AG04449 (cell line): ENCODE measurements at regions of chr1 and their contacts with region 1.

Region 1: DNA sequence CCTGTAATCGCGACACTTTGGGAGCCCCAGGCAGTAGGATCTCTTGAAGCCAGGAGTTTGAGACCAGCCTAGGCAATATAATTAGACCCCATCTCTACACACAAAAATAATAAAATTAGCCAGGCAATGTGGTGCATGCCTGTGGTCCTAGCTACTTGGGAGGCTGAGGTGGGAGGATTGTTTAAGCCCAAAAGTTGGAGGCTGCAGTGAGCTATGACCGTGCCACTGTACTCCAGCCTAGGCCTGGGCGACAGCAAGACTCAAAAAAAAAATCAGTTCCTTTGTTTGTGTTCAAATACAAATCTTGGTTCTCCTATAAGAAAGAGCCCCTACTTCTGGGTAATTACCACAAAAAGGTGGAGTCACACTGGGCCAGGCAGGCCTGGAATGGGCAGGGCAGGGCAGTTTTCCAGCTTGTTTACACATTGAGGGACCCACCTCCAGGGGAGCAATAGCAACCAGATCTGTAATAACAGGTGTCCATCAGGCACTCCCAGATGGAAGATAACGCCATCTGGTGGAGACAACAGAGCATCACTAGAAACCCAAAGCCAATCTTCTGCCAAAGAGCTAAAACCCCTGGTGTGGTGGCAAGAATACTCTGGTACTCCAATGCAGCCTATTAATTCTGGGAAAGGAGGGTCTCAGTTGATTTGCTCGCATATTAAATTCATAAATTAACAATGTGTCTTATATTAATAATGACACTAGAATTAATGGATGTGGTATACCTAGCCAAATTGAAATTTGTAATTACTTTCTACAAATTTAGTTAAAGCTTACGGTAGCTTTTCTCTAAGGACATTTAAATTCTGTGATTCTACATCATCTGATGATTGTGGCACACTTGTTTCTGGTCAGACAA is 13.2 kb downstream of the PPP1R15B start:
- DNase-seq: no peak
- H3K4me3 ChIP-seq: no peak overlapping the region
- CTCF ChIP-seq: peak; percentile 74

Region 2: DNA sequence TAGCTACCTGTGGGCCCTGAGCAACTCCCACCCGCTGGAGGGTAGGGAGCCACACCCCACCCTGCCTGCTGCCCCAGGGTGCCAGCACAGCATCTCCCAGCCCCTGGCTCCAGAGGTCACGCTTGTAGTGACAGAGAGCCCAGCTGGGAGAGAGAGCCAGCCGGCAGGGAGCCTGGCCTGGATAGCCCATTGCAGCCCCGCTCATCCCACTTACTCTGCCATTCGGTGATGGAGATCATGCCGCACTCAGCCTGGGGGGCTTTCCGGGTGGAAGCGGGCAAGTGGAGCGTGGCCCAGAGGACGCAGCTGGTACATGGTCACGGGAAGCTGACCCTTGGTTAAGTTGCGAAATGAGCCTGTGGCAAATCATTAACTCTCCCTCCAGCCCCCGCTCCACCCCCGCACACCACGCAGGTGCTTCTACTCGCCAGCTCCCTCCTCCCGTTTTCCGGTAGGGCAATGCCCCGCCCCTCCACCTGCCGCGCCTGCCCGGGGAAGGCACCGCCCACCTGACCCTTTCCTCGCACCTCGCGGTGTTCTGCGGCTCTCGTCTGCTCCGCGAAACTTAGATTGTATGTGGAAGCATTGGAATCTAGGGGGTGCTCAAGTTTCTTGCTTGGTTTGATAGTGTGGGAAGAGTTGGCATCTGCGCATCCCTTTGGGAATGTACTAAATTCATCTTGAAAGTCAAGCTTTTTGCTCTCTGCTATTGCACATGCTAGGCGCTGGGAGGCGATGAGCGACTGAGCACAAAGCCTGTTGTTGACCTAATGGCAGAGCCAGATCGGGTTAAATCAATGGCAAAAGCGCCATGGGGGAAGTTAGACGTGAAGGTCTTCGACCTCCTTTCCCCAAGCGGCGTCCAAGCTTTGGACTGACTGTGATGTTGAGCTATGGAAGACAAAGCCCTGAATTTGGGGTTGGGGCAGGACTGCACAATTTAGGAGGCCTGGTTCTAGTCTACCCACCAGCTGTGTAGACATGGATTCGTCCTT is 184.5 kb before region 1 on chr1 and contains the start of gene GOLT1A:
- CTCF ChIA-PET with region 1: interaction called, 53 read pairs
- POLR2A ChIA-PET with region 1: no interaction called
- DNase-seq: peak; percentile 59
- H3K4me3 ChIP-seq: peak within 1 kb of the TSS; percentile 8
- CTCF ChIP-seq: peak; percentile 75

Region 3: DNA sequence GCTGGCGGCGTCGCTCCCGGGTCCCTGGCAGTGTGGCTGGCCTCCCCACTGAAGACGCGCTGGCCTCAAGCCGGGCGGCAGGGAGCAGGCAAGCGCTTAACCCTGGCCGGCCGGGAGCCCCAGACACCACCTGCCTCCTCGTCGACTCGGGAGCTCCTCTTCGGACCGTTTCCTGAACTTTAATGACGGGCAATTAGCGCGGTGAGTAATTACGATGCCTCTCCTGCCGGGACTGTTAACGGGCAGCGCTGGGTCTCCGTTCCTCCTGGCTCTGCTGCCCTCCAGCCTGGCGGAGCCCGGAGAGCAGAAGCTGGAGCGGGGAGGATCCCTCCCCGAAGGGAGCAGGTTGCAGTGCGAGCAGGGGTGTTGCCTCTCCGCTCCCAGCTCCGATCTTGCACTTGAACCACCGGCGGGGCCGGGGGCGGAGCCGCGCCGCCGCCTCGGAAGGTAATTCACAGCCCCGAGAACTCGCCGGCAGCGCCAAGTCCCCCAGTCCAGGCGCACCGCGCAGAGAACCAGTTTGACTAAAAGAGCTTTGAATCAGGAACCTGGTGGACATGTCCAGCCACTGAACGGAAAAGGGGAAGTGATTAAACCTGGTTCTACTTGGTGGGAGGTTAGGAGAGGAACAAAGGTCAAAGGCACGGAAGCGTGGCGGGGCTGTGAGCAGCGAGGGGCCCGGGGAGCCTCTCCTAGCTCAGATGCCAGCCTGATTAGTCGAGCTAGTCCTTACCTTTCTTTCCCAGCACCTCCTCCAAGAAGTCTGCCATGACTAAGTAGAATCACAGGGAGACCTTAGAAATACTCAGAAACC is 20.4 kb before region 1 on chr1:
- CTCF ChIA-PET with region 1: interaction called, 25 read pairs
- POLR2A ChIA-PET with region 1: no interaction called
- DNase-seq: no peak
- H3K4me3 ChIP-seq: peak overlapping the region; percentile 50
- CTCF ChIP-seq: no peak

Region 4: GRCh38 chr1:204411451-204412204 is 13.2 kb after region 1 on chr1 and contains the start of gene PPP1R15B:
- CTCF ChIA-PET with region 1: interaction called, 111 read pairs
- POLR2A ChIA-PET with region 1: interaction called, 8 read pairs
- DNase-seq: peak; percentile 93
- H3K4me3 ChIP-seq: peak within 1 kb of the TSS; percentile 73
- CTCF ChIP-seq: no peak

Region 5: GRCh38 chr1:204465546-204466415 is 67.3 kb after region 1 on chr1:
- CTCF ChIA-PET with region 1: no interaction called
- POLR2A ChIA-PET with region 1: no interaction called
- DNase-seq: no peak
- H3K4me3 ChIP-seq: no peak overlapping the region
- CTCF ChIP-seq: no peak

Region 6: DNA sequence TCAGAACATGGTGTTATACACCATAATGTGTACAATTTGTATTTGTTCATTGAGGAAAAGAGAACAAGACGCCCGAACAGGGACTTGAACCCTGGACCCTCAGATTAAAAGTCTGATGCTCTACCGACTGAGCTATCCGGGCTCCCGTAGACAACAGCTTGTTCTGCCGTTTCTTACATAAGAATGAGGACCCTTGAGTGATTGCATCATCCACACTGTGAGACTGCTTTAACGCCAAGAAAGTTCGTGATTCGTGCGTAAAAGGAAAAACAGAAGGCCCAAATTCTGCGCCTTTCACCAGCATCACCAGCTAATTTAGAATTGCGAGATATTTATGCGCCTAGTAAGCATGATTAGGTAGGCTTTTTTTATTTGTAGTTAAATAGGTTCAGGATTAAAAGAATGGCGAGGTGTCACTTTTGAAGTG is 108.5 kb after region 1 on chr1:
- CTCF ChIA-PET with region 1: interaction called, 94 read pairs
- POLR2A ChIA-PET with region 1: interaction called, 5 read pairs
- DNase-seq: peak; percentile 79
- H3K4me3 ChIP-seq: peak overlapping the region; percentile 55
- CTCF ChIP-seq: no peak